Psoas muscle (tissue), 8 donors: ENCODE measurements at regions of chr1 and their contacts with region 1.

Region 1: GRCh38 chr1:205977402-205978014 is 25.7 kb downstream of the RAB7B start:
- DNase-seq: peak; percentile 65 to 88
- ATAC-seq: peak; percentile 81 to 93 (median 84)
- H3K4me3 ChIP-seq: no peak overlapping the region
- H3K27ac ChIP-seq: peak overlapping the region; percentile 58
- H3K4me1 ChIP-seq: peaks cover 12% of the 10 kb centered on the region
- H3K27me3 ChIP-seq: no peaks in the 10 kb centered on the region
- CTCF ChIP-seq: peak; percentile 99

Region 2: GRCh38 chr1:205591522-205592351 is 385.8 kb before region 1 on chr1:
- intact Hi-C with region 1: loop called in 1 of 2 experiments (anchors 10 kb)
- DNase-seq: peak; percentile 84 to 91
- ATAC-seq: peak; percentile 95 to 98 (median 96)
- H3K4me3 ChIP-seq: peak overlapping the region; percentile 53
- H3K27ac ChIP-seq: no peak overlapping the region
- H3K4me1 ChIP-seq: no peaks in the 10 kb centered on the region
- H3K27me3 ChIP-seq: no peaks in the 10 kb centered on the region
- CTCF ChIP-seq: peak; percentile 99

Region 3: GRCh38 chr1:205658943-205659581 is 318.4 kb before region 1 on chr1:
- intact Hi-C with region 1: loop called in 1 of 2 experiments (anchors 5 kb)
- DNase-seq: peak; percentile 79 to 90
- ATAC-seq: peak; percentile 77 to 91 (median 85)
- H3K4me3 ChIP-seq: peak overlapping the region; percentile 22
- H3K27ac ChIP-seq: no peak overlapping the region
- H3K4me1 ChIP-seq: no peaks in the 10 kb centered on the region
- H3K27me3 ChIP-seq: no peaks in the 10 kb centered on the region
- CTCF ChIP-seq: peak; percentile 83

Region 4: DNA sequence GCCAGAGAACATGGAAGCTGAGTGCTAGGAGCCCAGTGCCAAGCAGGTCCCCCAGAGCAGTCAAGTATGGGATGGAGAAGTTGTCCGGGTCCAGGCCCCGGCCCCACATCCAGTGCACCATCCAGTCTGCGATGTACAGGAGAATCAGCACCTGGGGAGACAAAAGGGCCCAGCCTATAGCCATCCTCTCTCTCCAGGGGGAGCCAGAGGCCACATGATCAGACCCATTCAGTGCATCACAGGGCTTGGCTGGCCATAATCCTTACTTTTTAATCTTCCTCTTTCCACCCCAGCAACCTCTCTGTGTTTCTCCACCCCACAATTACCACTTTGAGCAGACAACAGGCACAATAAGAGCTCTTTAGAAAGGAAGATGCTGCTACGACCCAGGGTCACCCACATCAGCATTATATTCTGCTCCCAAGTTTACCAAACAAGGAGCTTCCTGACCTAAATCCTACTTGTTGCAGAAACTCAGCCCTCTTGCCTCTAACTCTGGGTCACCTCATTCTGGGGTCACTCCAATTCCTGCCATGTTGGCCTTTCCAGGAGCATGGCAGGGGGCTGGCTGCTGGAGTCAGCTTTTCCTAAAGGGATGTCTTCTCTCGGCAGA is 185.8 kb before region 1 on chr1:
- intact Hi-C with region 1: loop called (anchors 2 kb)
- DNase-seq: peak; percentile 55 to 75
- ATAC-seq: peak; percentile 82 to 90 (median 84)
- H3K4me3 ChIP-seq: no peak overlapping the region
- H3K27ac ChIP-seq: peak overlapping the region; percentile 43
- H3K4me1 ChIP-seq: peaks cover 12% of the 10 kb centered on the region
- H3K27me3 ChIP-seq: no peaks in the 10 kb centered on the region
- CTCF ChIP-seq: peak; percentile 77

Region 5: DNA sequence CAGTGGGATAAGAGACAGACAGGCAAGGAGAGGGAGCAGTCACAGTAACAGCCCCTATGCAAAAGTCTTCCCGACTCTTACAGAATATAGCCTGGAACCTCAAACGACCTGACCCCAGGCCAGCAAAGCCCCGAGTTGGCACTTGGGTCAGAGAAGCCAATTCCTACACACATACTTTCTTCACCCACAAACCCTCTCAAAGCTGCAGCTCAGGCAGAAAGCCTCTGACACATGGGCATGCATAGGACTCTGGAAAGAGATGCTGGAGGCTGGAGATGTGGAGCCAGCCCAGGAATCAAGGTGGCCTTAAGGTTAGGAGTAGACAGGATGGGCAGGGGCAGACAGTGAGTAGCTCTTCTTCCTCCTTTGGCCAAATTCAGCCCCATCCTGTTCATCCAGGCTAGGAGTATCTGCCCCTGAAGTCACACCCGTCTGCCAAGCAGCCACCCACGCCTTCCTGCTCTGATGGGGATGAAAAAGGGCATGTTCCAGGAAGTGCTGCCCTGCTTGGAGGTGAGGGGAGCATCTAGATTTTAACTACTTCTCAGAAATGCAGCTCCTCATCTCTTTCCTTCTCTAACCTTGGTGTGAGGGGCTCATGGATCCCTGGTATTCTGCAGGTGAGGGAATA is 172.3 kb before region 1 on chr1:
- intact Hi-C with region 1: loop called in 1 of 2 experiments (anchors 5 kb)
- DNase-seq: no peak
- ATAC-seq: no peak
- H3K4me3 ChIP-seq: no peak overlapping the region
- H3K27ac ChIP-seq: no peak overlapping the region
- H3K4me1 ChIP-seq: peaks cover 51% of the 10 kb centered on the region
- H3K27me3 ChIP-seq: no peaks in the 10 kb centered on the region
- CTCF ChIP-seq: no peak

Region 6: GRCh38 chr1:205919026-205919746 is 58.3 kb before region 1 on chr1:
- intact Hi-C with region 1: loop called (anchors 1 kb)
- DNase-seq: peak; percentile 73 to 86
- ATAC-seq: peak; percentile 68 to 80 (median 74)
- H3K4me3 ChIP-seq: no peak overlapping the region
- H3K27ac ChIP-seq: peak overlapping the region; percentile 59
- H3K4me1 ChIP-seq: peaks cover 46% of the 10 kb centered on the region
- H3K27me3 ChIP-seq: no peaks in the 10 kb centered on the region
- CTCF ChIP-seq: peak; percentile 93